ENCODE measurements at regions of chr14 and their contacts with region 1.

Region 1: DNA sequence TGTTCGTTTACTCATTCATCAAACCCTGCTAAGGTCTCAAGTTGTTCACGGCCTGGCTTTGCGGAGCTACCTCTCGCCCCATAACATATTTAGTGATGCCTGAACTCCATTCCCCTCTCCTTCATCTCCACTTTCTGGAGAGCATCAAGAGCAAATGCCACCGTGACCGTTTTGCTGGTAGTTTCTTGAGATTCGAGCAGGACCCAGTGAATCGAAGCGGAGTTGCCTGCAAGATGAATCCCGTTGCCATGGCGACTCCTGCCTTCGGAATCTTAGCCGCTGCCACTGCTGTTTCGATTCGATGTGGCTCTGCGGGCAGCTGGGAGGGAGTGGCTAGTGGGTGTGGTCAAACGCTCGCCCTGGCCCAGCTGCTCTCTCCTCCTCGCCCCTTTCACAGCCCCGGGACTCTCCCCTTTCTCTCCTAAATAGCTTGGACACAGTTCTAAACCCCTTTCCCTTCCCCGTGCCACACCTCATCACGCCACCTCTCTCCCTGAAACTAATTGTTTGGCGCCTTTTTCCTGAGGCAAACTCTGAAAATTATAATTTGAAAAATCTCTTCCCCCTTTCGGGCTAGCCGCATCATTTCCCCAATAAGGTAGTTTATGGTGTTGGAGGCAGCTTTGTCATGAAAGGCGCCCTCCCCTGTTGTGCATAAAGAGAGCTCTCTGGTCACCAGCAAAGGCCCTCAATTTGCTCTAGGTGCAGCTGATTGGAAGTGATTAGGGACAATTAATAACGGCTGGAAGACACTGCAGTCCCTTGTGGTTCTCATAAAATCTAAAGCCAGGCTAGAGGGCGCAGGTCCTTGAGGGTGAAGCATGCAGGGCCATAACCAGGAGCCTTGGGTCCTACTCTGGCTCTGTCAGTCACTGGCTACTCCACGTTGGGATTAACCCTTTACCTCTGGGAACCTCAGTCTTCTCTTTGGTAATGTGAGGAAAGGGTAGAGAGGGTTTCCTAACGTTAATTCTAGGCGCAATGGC is 1.6 kb downstream of the DAAM1 start:
- DNase-seq: peak; percentile 60
- ATAC-seq: peak; percentile 86
- H3K4me3 ChIP-seq: peak overlapping the region; percentile 84 to 93
- H3K27ac ChIP-seq: peak overlapping the region; percentile 84
- H3K4me1 ChIP-seq: peaks cover 3% of the 10 kb centered on the region
- H3K27me3 ChIP-seq: peaks cover 5% of the 10 kb centered on the region; the same call in 1 of the 2 replicates
- CTCF ChIP-seq: peak; percentile 64

Region 2: GRCh38 chr14:59020382-59020781 is 169.7 kb before region 1 on chr14:
- CTCF ChIA-PET with region 1: no interaction called
- POLR2A ChIA-PET with region 1: no interaction called
- in situ Hi-C with region 1: no loop called
- intact Hi-C with region 1: no loop called
- DNase-seq: no peak
- ATAC-seq: no peak
- H3K4me3 ChIP-seq: no peak overlapping the region
- H3K27ac ChIP-seq: no peak overlapping the region
- H3K4me1 ChIP-seq: no peaks in the 10 kb centered on the region
- H3K27me3 ChIP-seq: no peaks in the 10 kb centered on the region
- CTCF ChIP-seq: peak; percentile 46; the same call in 1 of the 2 replicates

Region 3: DNA sequence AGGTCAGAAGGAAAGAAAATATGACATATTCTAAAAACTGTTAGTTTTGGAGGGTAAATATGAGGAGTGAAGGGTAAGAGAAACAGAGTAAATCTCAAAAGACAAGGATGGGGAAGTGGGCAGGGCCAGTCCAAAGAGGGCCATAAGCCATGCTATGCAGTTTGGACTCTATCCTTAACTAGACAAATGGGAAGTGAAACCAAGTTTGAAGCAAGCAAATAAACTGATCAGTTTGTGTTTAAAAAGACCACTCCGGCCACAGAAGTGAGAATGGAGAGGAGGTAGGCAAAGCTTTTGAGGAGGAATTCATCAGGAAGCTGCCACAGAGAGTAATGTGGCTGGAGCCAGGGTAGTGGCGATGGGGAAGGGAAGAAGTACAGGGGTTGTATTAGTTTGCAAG is 39.1 kb before region 1 on chr14:
- CTCF ChIA-PET with region 1: no interaction called
- POLR2A ChIA-PET with region 1: no interaction called
- in situ Hi-C with region 1: no loop called
- intact Hi-C with region 1: no loop called
- DNase-seq: no peak
- ATAC-seq: no peak
- H3K4me3 ChIP-seq: no peak overlapping the region
- H3K27ac ChIP-seq: no peak overlapping the region
- H3K4me1 ChIP-seq: no peaks in the 10 kb centered on the region
- H3K27me3 ChIP-seq: no peaks in the 10 kb centered on the region
- CTCF ChIP-seq: no peak

Region 4: DNA sequence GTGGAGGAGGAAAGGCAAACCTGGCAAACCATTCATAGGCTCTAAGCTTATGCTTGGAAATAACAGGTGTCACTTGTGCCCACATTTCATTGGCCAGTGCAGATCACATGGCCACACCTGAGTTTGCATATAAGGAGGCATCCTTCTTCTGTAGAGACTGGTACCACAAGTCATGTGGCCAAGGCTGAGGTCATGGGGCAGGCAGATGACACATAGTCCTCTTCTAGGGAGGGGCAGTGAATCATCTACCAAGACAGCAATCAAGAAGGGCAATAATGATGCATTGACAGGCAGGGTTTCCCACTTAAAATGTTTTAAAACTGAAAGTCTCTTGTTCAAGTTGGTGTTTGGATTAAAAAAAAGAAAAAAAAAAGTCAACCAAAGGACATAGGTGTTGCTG is 75.7 kb after region 1 on chr14:
- CTCF ChIA-PET with region 1: no interaction called
- POLR2A ChIA-PET with region 1: no interaction called
- in situ Hi-C with region 1: no loop called
- intact Hi-C with region 1: no loop called
- DNase-seq: no peak
- ATAC-seq: no peak
- H3K4me3 ChIP-seq: no peak overlapping the region
- H3K27ac ChIP-seq: no peak overlapping the region
- H3K4me1 ChIP-seq: no peaks in the 10 kb centered on the region
- H3K27me3 ChIP-seq: no peaks in the 10 kb centered on the region
- CTCF ChIP-seq: no peak

Region 5: GRCh38 chr14:59281613-59282377 is 91.7 kb after region 1 on chr14:
- CTCF ChIA-PET with region 1: no interaction called
- POLR2A ChIA-PET with region 1: no interaction called
- in situ Hi-C with region 1: no loop called
- intact Hi-C with region 1: no loop called
- DNase-seq: no peak
- ATAC-seq: no peak
- H3K4me3 ChIP-seq: no peak overlapping the region
- H3K27ac ChIP-seq: peak overlapping the region; percentile 48; the same call in 1 of the 2 replicates
- H3K4me1 ChIP-seq: peaks cover 8% of the 10 kb centered on the region; the same call in 1 of the 2 replicates
- H3K27me3 ChIP-seq: no peaks in the 10 kb centered on the region
- CTCF ChIP-seq: no peak

Region 6: GRCh38 chr14:59438195-59438647 is 248.1 kb after region 1 on chr14:
- CTCF ChIA-PET with region 1: no interaction called
- POLR2A ChIA-PET with region 1: no interaction called
- in situ Hi-C with region 1: no loop called
- intact Hi-C with region 1: loop called (anchors 5 kb)
- DNase-seq: no peak
- ATAC-seq: no peak
- H3K4me3 ChIP-seq: no peak overlapping the region
- H3K27ac ChIP-seq: no peak overlapping the region
- H3K4me1 ChIP-seq: no peaks in the 10 kb centered on the region
- H3K27me3 ChIP-seq: no peaks in the 10 kb centered on the region
- CTCF ChIP-seq: no peak